HEK293 (cell line): ENCODE measurements at regions of chr1 and their contacts with region 1.

Region 1: DNA sequence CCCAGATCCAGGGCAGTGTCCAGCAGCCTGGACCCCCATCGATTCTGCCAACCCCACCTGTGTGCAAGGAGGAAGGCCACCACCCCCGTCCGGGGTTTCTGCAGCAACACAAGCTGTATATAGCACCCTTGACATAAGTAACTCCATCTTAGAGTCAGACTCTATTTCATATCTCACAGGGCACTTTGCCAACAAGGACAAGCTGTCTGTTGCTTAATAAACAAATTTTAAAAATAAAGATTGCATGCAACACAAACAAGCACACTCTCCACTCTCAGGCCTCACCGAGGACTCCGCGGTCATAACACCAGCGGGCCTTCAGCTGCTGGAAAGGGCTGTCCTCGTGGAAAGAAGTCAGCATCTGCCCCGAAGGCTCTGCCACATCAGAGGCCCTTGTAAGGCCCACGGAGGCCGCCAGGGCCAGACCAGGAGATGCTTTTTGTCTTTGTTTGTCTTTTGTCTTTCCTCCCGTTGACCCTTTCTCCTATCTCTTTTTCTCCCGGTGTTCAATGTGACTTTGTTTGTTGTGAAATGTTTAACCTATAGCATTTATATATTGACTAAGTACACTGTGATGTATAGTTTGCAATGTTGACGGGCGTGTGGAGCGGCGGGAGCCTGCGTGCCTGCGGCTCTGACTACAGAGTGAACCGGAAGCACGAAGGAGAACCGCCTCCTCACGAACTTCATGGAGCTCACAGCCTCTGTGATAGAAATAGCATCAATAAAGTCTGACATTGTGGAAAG is 24.2 kb downstream of the MEGF6 start:
- H3K4me3 ChIP-seq: no peak overlapping the region
- H3K27ac ChIP-seq: no peak overlapping the region
- H3K4me1 ChIP-seq: no peaks in the 10 kb centered on the region
- CTCF ChIP-seq: no peak

Region 2: GRCh38 chr1:3624200-3625136 is 37.4 kb after region 1 on chr1 and contains the start of gene TPRG1L:
- CTCF ChIA-PET with region 1: interaction called, 41 read pairs
- POLR2A ChIA-PET with region 1: no interaction called
- H3K4me3 ChIP-seq: peak within 1 kb of the TSS; percentile 95
- H3K27ac ChIP-seq: no peak within 1 kb of the TSS; the same call in 1 of the 2 replicates
- H3K4me1 ChIP-seq: no peaks in the 10 kb centered on the region
- CTCF ChIP-seq: no peak